K562 (cell line): ENCODE measurements at regions of chr6 and their contacts with region 1.

Region 1: GRCh38 chr6:3742426-3743344 is 8.8 kb downstream of the PXDC1 start:
- DNase-seq: peak; percentile 81 to 89 (median 88)
- ATAC-seq: peak; percentile 92
- H3K4me3 ChIP-seq: no peak overlapping the region
- H3K27ac ChIP-seq: no peak overlapping the region
- H3K4me1 ChIP-seq: peaks cover 3 to 6% of the 10 kb centered on the region in 2 experiments; a peak in 2 of 5 replicates
- H3K27me3 ChIP-seq: peaks cover 31 to 81% of the 10 kb centered on the region in 2 experiments; a peak in 4 of 5 replicates
- CTCF ChIP-seq: peak; percentile 91 to 97 (median 96)
- EP300 ChIP-seq: no peak
- POLR2A ChIP-seq: no peak
- RAD21 ChIP-seq: peak; percentile 96 to 97

Region 2: GRCh38 chr6:3612341-3613041 is 130.2 kb before region 1 on chr6:
- CTCF ChIA-PET with region 1: no interaction called
- POLR2A ChIA-PET with region 1: no interaction called
- in situ Hi-C with region 1: no loop called
- intact Hi-C with region 1: no loop called
- DNase-seq: no peak
- ATAC-seq: no peak
- H3K4me3 ChIP-seq: no peak overlapping the region
- H3K27ac ChIP-seq: no peak overlapping the region
- H3K4me1 ChIP-seq: no peaks in the 10 kb centered on the region
- H3K27me3 ChIP-seq: peaks cover 60 to 77% of the 10 kb centered on the region in 2 experiments
- CTCF ChIP-seq: no peak
- EP300 ChIP-seq: no peak
- POLR2A ChIP-seq: no peak
- RAD21 ChIP-seq: no peak

Region 3: GRCh38 chr6:3759646-3760232 is 17.1 kb after region 1 on chr6:
- CTCF ChIA-PET with region 1: no interaction called
- POLR2A ChIA-PET with region 1: no interaction called
- in situ Hi-C with region 1: no loop called
- intact Hi-C with region 1: no loop called
- DNase-seq: no peak
- ATAC-seq: no peak
- H3K4me3 ChIP-seq: no peak overlapping the region
- H3K27ac ChIP-seq: no peak overlapping the region
- H3K4me1 ChIP-seq: peaks cover 0 to 11% of the 10 kb centered on the region in 2 experiments; a peak in 2 of 5 replicates
- H3K27me3 ChIP-seq: peaks cover 21 to 31% of the 10 kb centered on the region in 2 experiments; a peak in 4 of 5 replicates
- CTCF ChIP-seq: no peak
- EP300 ChIP-seq: no peak
- POLR2A ChIP-seq: no peak
- RAD21 ChIP-seq: no peak

Region 4: DNA sequence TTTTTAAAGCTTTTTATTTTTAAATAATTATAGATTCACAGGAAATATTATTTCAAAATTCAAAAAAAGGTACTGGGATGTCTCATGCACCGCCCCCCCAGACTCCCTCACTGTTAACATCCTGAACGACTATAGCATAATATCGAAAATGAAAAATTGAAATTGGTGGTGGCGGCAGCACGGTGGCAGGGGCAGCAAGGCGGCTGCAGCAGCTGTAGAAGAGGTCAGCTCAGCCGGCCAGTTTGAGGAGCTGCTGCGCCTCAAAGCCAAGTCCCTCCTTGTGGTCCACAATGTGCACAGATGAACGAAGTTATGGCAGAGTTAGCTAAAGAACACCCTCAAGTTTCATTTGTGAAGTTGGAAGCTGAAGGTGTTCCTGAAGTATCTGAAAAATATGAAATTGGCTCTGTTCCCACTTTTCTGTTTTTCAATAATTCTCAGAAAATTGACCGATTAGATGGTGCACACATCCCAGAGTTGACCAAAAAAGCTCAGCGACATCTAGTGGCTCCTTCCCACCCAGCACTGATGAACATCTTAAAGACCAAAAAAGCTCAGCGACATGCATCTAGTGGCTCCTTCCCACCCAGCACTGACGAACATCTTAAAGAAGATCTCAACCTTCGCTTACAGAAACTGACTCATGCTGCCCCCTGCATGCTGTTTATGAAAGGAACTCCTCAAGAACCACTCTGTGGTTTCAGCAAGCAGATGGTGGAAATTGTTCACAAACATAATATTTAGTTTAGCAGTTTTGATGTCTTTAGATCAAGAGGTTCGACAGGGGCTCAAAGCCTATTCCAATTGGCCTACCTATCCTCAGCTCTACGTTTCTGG is 235.4 kb after region 1 on chr6:
- CTCF ChIA-PET with region 1: interaction called, 17 read pairs
- POLR2A ChIA-PET with region 1: no interaction called
- in situ Hi-C with region 1: no loop called
- intact Hi-C with region 1: loop called (anchors 1 kb)
- DNase-seq: peak; percentile 46 to 74 (median 50)
- ATAC-seq: peak; percentile 100
- H3K4me3 ChIP-seq: no peak overlapping the region
- H3K27ac ChIP-seq: no peak overlapping the region
- H3K4me1 ChIP-seq: no peaks in the 10 kb centered on the region
- H3K27me3 ChIP-seq: peaks cover 14 to 19% of the 10 kb centered on the region in 2 experiments
- CTCF ChIP-seq: peak; percentile 72 to 88 (median 83)
- EP300 ChIP-seq: no peak
- POLR2A ChIP-seq: no peak
- RAD21 ChIP-seq: peak; percentile 61 to 82

Region 5: DNA sequence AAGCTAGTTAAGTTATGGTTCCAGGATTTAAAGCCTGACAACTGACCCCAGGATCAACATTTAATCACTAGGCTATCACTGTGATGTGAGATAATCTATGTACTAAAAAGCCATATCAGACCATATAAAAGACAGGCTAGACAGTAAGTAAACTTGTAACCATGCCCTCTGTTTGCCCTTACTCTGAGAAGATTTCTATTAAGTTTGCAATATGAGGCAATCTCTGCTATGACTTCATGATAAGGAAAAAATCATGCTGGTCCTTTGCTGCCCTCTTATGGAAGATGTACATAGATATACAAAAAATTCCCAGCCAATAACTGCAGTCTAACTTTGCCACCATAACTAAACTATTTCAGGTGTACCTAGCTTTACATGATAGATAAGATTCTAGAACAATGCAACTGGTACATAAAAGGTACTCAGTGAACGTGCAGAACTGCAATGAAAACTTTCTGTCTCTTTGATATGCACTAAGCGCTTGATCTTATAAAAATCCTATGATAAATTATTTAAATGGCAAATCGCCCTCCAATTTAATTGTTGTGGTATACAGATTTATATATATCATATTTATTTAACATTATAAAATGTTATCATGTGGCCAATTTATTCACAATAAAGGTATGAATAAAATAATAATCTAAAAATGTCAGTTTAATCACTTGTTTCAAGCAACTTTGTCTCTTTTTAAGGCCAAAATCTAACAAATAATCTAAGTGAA is 265.8 kb after region 1 on chr6:
- CTCF ChIA-PET with region 1: interaction called, 22 read pairs
- POLR2A ChIA-PET with region 1: no interaction called
- in situ Hi-C with region 1: no loop called
- intact Hi-C with region 1: loop called (anchors 5 kb)
- DNase-seq: peak in 3 of 4 experiments; percentile 24 to 50 (median 38)
- ATAC-seq: peak; percentile 58
- H3K4me3 ChIP-seq: no peak overlapping the region
- H3K27ac ChIP-seq: no peak overlapping the region; the same call in 2 of the 3 replicates
- H3K4me1 ChIP-seq: peaks cover 0 to 9% of the 10 kb centered on the region in 2 experiments; a peak in 3 of 5 replicates
- H3K27me3 ChIP-seq: no peaks in the 10 kb centered on the region
- CTCF ChIP-seq: peak; percentile 38 to 72 (median 45); a peak in 4 of 6 replicates
- EP300 ChIP-seq: peak; percentile 53; the same call in 1 of the 2 replicates
- POLR2A ChIP-seq: no peak
- RAD21 ChIP-seq: peak; percentile 69 to 74

Region 6: GRCh38 chr6:4178737-4179333 is 436.1 kb after region 1 on chr6:
- CTCF ChIA-PET with region 1: no interaction called
- POLR2A ChIA-PET with region 1: no interaction called
- in situ Hi-C with region 1: loop called (anchors 10 kb)
- intact Hi-C with region 1: no loop called
- DNase-seq: peak; percentile 35 to 59 (median 50)
- ATAC-seq: peak; percentile 71
- H3K4me3 ChIP-seq: no peak overlapping the region
- H3K27ac ChIP-seq: no peak overlapping the region
- H3K4me1 ChIP-seq: peaks cover 0 to 20% of the 10 kb centered on the region in 2 experiments; a peak in 3 of 5 replicates
- H3K27me3 ChIP-seq: no peaks in the 10 kb centered on the region
- CTCF ChIP-seq: no peak
- EP300 ChIP-seq: no peak
- POLR2A ChIP-seq: no peak
- RAD21 ChIP-seq: no peak